B cell (primary cell): ENCODE measurements at regions of chr2 and their contacts with region 1.

Region 1: DNA sequence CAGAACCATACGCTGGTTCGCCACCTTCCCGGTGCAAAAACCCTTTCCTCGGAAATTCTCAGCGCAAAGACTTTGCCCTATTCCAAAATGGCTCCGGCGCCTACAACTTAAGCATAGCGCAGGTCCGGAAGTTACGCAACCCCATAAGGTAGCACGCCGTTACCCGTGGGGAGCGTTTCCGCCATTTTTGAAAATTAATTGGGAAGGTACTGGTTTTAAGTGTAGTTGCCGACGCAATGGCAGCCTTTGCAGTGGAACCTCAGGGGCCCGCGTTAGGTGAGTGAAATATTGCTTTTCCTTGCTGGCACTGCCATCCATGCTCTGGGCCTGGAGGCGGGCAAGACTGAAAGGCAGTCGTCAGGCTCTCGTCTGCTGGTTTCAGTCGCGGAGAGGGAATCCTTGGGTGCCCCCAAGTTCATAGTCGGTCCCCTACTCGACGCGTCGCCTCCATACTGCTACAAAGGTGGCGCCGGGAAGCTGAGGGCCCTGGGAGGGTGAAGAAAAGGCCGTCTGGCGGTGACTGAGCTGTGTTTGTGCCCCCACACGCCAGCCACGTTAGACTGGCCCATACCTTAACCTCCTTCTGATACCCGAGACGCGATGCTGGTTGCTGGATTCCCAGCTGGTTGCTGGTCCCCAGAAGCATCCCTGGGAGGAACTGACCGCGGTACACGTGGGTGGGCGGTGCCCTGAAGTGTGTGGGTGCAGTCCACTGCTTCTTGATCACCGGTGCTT is at the start of gene NUP35:
- DNase-seq: peak; percentile 89
- ATAC-seq: peak; percentile 97
- H3K4me3 ChIP-seq: peak within 1 kb of the TSS; percentile 82 to 98 (median 94)
- H3K4me3 Mint-ChIP-seq: peak within 1 kb of the TSS; percentile 93
- H3K27ac ChIP-seq: peak within 1 kb of the TSS; percentile 84 to 87
- H3K27ac Mint-ChIP-seq: peak within 1 kb of the TSS; percentile 93
- H3K4me1 ChIP-seq: peaks cover 3 to 15% of the 10 kb centered on the region in 2 donors
- H3K4me1 Mint-ChIP-seq: peaks cover 22% of the 10 kb centered on the region
- H3K27me3 ChIP-seq: peaks cover 0 to 9% (median 5%) of the 10 kb centered on the region in 4 experiments
- H3K27me3 Mint-ChIP-seq: peaks cover 17% of the 10 kb centered on the region
- CTCF ChIP-seq: no peak
- total RNA-seq, gene NUP35: 21.9 and 26.0 TPM in 2 replicates

Region 2: DNA sequence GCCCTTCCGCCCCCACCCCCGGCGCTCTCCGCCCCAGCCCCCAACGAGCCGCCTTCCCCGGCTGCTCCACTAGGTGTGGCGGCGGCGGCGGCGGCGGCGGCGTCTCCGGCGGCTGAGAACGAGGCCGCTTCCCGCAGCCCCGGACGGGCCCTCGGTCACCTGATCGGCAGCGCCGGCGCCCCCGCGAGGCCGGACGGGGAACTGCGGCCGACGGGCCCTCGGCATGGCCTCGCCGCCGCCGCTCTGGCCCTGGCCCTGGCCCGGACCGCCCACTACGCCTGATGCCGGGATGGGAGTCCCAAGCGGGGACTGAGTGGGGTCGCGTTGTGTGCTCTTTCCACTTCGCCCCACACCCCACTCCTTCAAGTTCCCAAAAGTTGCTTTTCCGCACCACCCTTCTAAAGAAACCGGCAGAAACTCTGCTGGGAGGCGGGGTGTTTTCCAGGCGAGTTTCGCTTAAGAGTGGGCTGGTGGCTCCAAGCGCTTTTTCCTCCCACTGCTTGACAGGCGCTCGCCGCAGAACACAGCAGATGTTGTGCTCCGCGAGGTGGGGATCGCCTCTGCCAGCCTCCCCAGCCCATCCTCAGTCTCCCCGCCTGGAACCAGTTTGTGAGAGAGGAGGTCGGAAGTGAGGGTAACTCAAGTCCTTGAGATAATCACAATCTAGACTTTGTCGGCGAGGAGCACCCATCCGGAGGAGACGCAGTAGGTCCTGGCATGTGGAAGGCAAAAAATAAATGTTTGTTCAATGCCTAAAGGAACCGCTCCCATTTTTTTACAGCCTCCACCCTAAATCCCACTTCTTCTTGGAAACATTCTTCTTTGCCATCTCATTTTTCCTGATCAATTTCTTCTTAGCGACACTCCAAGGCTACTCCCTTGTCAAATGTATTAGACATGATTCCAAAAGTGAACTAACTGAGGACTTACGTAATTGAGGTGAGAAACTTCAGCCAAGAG is 85.8 kb before region 1 on chr2 and contains the start of gene NCKAP1:
- CTCF ChIA-PET with region 1: no interaction called
- POLR2A ChIA-PET with region 1: interaction called, 3 read pairs
- intact Hi-C with region 1: loop called (anchors 5 kb)
- DNase-seq: peak; percentile 65
- ATAC-seq: peak; percentile 70
- H3K4me3 ChIP-seq: peak within 1 kb of the TSS in 3 of 5 experiments; percentile 32 to 43 (median 35)
- H3K4me3 Mint-ChIP-seq: peak within 1 kb of the TSS; percentile 74
- H3K27ac ChIP-seq: no peak within 1 kb of the TSS
- H3K27ac Mint-ChIP-seq: peak within 1 kb of the TSS; percentile 41
- H3K4me1 ChIP-seq: peaks cover 22 to 41% of the 10 kb centered on the region in 2 donors
- H3K4me1 Mint-ChIP-seq: peaks cover 27% of the 10 kb centered on the region
- H3K27me3 ChIP-seq: peaks cover 6 to 58% (median 51%) of the 10 kb centered on the region in 4 experiments
- H3K27me3 Mint-ChIP-seq: peaks cover 50% of the 10 kb centered on the region
- CTCF ChIP-seq: peak; percentile 70
- total RNA-seq, gene NCKAP1: 0.05 TPM in 1 of 2 replicates, not detected in the other

Region 3: GRCh38 chr2:183078465-183079138 is 45.8 kb before region 1 on chr2 and contains the start of gene DUSP19:
- CTCF ChIA-PET with region 1: interaction called, 5 read pairs
- POLR2A ChIA-PET with region 1: no interaction called
- intact Hi-C with region 1: loop called (anchors 1 kb)
- DNase-seq: peak; percentile 87
- ATAC-seq: peak; percentile 86
- H3K4me3 ChIP-seq: peak within 1 kb of the TSS; percentile 60 to 98 (median 89)
- H3K4me3 Mint-ChIP-seq: peak within 1 kb of the TSS; percentile 99
- H3K27ac ChIP-seq: peak within 1 kb of the TSS in 1 of 2 donors; percentile 41
- H3K27ac Mint-ChIP-seq: peak within 1 kb of the TSS; percentile 83
- H3K4me1 ChIP-seq: peaks cover 3 to 6% of the 10 kb centered on the region in 2 donors
- H3K4me1 Mint-ChIP-seq: peaks cover 11% of the 10 kb centered on the region
- H3K27me3 ChIP-seq: peaks cover 0 to 9% (median 3%) of the 10 kb centered on the region in 4 experiments
- H3K27me3 Mint-ChIP-seq: no peaks in the 10 kb centered on the region
- CTCF ChIP-seq: no peak
- total RNA-seq, gene DUSP19: 1.7 and 2.0 TPM in 2 replicates